ENCODE measurements at regions of chr19 and their contacts with region 1.

Region 1: GRCh38 chr19:29908963-29909944 is 32.8 kb upstream of the URI1 start:
- DNase-seq: no peak
- ATAC-seq: no peak
- H3K4me3 ChIP-seq: no peak overlapping the region
- H3K4me3 Mint-ChIP-seq: no peak overlapping the region
- H3K27ac ChIP-seq: no peak overlapping the region
- H3K27ac Mint-ChIP-seq: no peak overlapping the region
- H3K4me1 ChIP-seq: no peaks in the 10 kb centered on the region
- H3K4me1 Mint-ChIP-seq: no peaks in the 10 kb centered on the region
- H3K27me3 ChIP-seq: peaks cover 0 to 2% of the 10 kb centered on the region in 2 experiments
- H3K27me3 Mint-ChIP-seq: peaks cover 9% of the 10 kb centered on the region
- CTCF ChIP-seq: no peak

Region 2: GRCh38 chr19:29302002-29302928 is 607.0 kb before region 1 on chr19:
- CTCF ChIA-PET with region 1: no interaction called
- POLR2A ChIA-PET with region 1: no interaction called
- intact Hi-C with region 1: loop called in 1 of 2 experiments (anchors 5 kb)
- DNase-seq: peak in 1 of 14 experiments; percentile 42
- ATAC-seq: no peak
- H3K4me3 ChIP-seq: no peak overlapping the region
- H3K4me3 Mint-ChIP-seq: no peak overlapping the region
- H3K27ac ChIP-seq: no peak overlapping the region
- H3K27ac Mint-ChIP-seq: no peak overlapping the region
- H3K4me1 ChIP-seq: no peaks in the 10 kb centered on the region
- H3K4me1 Mint-ChIP-seq: no peaks in the 10 kb centered on the region
- H3K27me3 ChIP-seq: no peaks in the 10 kb centered on the region
- H3K27me3 Mint-ChIP-seq: peaks cover 29% of the 10 kb centered on the region
- CTCF ChIP-seq: no peak

Region 3: DNA sequence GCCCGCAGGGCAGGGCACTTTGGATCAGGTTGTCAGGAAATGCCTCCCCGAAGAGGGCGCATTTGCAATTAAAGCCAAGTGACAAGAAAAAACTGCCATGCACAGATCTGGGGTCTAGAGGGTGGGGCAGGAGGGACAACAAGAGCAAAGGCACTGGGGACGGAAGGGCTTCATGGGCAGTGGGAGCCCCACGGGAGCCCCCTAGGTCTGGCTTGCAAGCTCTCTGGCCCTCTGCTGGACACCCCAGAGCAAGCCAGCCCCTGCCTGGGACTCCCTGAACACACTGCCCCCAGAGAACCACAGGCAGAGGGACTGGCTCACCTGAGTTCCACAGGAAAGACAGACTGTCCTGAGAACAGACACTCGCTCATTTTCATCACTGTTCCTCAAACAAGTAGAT is 164.0 kb before region 1 on chr19:
- CTCF ChIA-PET with region 1: no interaction called
- POLR2A ChIA-PET with region 1: no interaction called
- intact Hi-C with region 1: no loop called
- DNase-seq: no peak
- ATAC-seq: no peak
- H3K4me3 ChIP-seq: no peak overlapping the region
- H3K4me3 Mint-ChIP-seq: no peak overlapping the region
- H3K27ac ChIP-seq: no peak overlapping the region
- H3K27ac Mint-ChIP-seq: no peak overlapping the region
- H3K4me1 ChIP-seq: no peaks in the 10 kb centered on the region
- H3K4me1 Mint-ChIP-seq: no peaks in the 10 kb centered on the region
- H3K27me3 ChIP-seq: no peaks in the 10 kb centered on the region
- H3K27me3 Mint-ChIP-seq: peaks cover 4% of the 10 kb centered on the region
- CTCF ChIP-seq: no peak

Region 4: DNA sequence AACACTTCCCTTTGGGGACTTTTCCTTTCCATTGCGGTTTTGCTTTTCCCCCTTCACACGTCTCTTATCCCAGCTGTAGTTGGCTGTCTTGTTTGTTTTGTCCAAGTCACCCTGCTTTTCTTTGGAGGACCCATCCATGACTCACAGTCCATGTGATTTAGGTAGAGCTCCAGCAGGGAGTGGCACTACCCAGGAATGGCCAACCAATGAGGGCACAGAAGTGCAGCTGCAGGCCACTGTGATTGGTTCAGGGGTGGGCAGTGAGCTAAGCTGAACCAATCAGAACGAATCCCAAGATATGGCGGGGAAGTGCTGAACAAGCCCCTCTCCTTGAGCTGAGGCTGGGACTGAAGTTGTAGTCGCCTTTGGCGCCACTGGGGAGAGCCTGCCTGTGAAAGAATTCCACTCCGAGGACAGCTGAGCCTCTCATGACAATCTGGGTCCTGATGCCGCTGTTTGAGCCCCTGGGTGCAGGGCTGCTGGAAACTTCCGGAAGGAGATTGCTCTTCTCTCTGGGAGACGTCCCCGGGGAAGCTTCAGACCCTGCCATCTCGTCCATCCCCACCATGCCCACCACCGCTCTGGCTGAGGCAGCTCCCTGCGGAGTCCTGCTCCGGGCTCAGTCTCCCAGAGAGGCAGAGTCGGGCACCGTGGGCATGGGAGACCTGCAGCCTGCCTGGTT is 30.1 kb before region 1 on chr19:
- CTCF ChIA-PET with region 1: no interaction called
- POLR2A ChIA-PET with region 1: no interaction called
- intact Hi-C with region 1: no loop called
- DNase-seq: no peak
- ATAC-seq: no peak
- H3K4me3 ChIP-seq: no peak overlapping the region
- H3K4me3 Mint-ChIP-seq: no peak overlapping the region
- H3K27ac ChIP-seq: no peak overlapping the region
- H3K27ac Mint-ChIP-seq: no peak overlapping the region
- H3K4me1 ChIP-seq: no peaks in the 10 kb centered on the region
- H3K4me1 Mint-ChIP-seq: no peaks in the 10 kb centered on the region
- H3K27me3 ChIP-seq: peaks cover 8 to 15% of the 10 kb centered on the region in 2 experiments
- H3K27me3 Mint-ChIP-seq: peaks cover 42% of the 10 kb centered on the region
- CTCF ChIP-seq: no peak

Measured in CD4-positive, alpha-beta T cell (primary cell).